ENCODE measurements at regions of chr4 and their contacts with region 1.

Region 1: GRCh38 chr4:88823058-88823919 is 125.7 kb upstream of the NAP1L5 start:
- DNase-seq: peak; percentile 87
- ATAC-seq: peak; percentile 83
- H3K4me3 ChIP-seq: peak overlapping the region; percentile 72
- H3K27ac ChIP-seq: peak overlapping the region; percentile 97
- H3K4me1 ChIP-seq: peaks cover 40% of the 10 kb centered on the region
- H3K27me3 ChIP-seq: no peaks in the 10 kb centered on the region
- CTCF ChIP-seq: no peak

Region 2: DNA sequence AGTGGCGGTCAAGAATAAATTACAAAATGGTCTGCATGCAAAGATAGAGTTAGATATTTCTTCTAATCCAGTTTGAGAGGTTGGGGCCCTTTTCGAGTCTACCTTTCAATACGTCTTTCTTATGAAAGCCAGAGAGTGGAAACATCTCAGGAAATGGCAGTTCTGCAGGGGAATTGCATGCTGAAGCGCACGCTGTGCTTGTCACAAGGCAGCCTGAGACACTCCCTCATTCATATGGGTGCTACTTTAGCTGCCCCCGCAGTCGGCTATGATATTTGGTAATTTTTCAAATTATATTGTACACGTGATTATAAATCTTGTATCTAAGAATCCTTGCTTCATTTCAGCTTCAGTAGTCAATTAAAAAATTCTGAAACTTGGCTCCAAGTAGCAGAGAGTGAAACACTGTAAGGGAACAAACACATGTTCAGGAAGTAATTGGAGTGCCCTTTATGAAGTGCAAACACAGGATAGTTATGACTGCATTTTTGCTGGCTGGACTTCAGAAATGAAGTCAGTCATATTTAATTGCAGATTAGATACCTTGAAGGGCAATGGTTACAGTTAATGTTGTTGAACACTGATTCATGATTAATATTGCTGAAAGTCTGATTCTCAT is 19.9 kb after region 1 on chr4:
- CTCF ChIA-PET with region 1: no interaction called
- POLR2A ChIA-PET with region 1: interaction called, 5 read pairs
- intact Hi-C with region 1: loop called (anchors 1 kb)
- DNase-seq: peak; percentile 78
- ATAC-seq: peak; percentile 86
- H3K4me3 ChIP-seq: peak overlapping the region; percentile 15; the same call in 1 of the 2 replicates
- H3K27ac ChIP-seq: peak overlapping the region; percentile 81
- H3K4me1 ChIP-seq: peaks cover 34% of the 10 kb centered on the region
- H3K27me3 ChIP-seq: no peaks in the 10 kb centered on the region
- CTCF ChIP-seq: no peak

Region 3: GRCh38 chr4:88879991-88880390 is 56.7 kb after region 1 on chr4:
- CTCF ChIA-PET with region 1: no interaction called
- POLR2A ChIA-PET with region 1: no interaction called
- intact Hi-C with region 1: no loop called
- DNase-seq: no peak
- ATAC-seq: no peak
- H3K4me3 ChIP-seq: no peak overlapping the region
- H3K27ac ChIP-seq: no peak overlapping the region
- H3K4me1 ChIP-seq: no peaks in the 10 kb centered on the region
- H3K27me3 ChIP-seq: no peaks in the 10 kb centered on the region
- CTCF ChIP-seq: no peak

Region 4: DNA sequence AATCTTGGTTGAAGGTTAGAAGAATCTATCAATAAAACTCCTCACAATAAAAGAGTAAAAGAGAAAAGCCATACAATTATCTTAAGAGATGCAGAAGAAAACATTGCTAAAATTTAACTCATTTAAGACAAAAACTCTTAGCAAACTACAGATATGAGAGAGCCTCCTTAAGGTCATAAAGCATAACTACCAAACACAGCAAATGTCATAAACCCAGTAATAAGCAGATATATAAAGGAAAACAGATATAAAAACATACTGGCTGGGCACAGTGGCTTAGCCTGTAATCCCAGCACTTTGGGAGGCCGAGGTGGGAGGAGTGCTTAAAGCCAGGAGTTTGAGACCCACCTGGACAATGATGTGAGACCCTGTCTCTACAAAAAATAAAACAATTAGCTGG is 68.3 kb after region 1 on chr4:
- CTCF ChIA-PET with region 1: no interaction called
- POLR2A ChIA-PET with region 1: no interaction called
- intact Hi-C with region 1: loop called (anchors 2 kb)
- DNase-seq: no peak
- ATAC-seq: peak; percentile 35
- H3K4me3 ChIP-seq: no peak overlapping the region
- H3K27ac ChIP-seq: no peak overlapping the region
- H3K4me1 ChIP-seq: no peaks in the 10 kb centered on the region
- H3K27me3 ChIP-seq: no peaks in the 10 kb centered on the region
- CTCF ChIP-seq: no peak

Region 5: GRCh38 chr4:89024051-89024675 is 200.9 kb after region 1 on chr4:
- CTCF ChIA-PET with region 1: no interaction called
- POLR2A ChIA-PET with region 1: interaction called, 5 read pairs
- intact Hi-C with region 1: loop called (anchors 1 kb)
- DNase-seq: peak; percentile 76
- ATAC-seq: peak; percentile 81
- H3K4me3 ChIP-seq: no peak overlapping the region
- H3K27ac ChIP-seq: no peak overlapping the region
- H3K4me1 ChIP-seq: no peaks in the 10 kb centered on the region
- H3K27me3 ChIP-seq: no peaks in the 10 kb centered on the region
- CTCF ChIP-seq: peak; percentile 82

Region 6: GRCh38 chr4:89788206-89789072 is 965.1 kb after region 1 on chr4:
- CTCF ChIA-PET with region 1: no interaction called
- POLR2A ChIA-PET with region 1: interaction called, 15 read pairs
- intact Hi-C with region 1: no loop called
- DNase-seq: no peak
- ATAC-seq: no peak
- H3K4me3 ChIP-seq: no peak overlapping the region
- H3K27ac ChIP-seq: no peak overlapping the region
- H3K4me1 ChIP-seq: no peaks in the 10 kb centered on the region
- H3K27me3 ChIP-seq: peaks cover 6% of the 10 kb centered on the region
- CTCF ChIP-seq: no peak